ENCODE measurements at regions of chr2 and their contacts with region 1.

Region 1: GRCh38 chr2:118882709-118883210 is 35.3 kb upstream of the EN1 start:
- DNase-seq: peak; percentile 45
- H3K4me3 ChIP-seq: peak overlapping the region in 1 of 2 experiments; percentile 40; a peak in 1 of 4 replicates
- H3K27ac ChIP-seq: no peak overlapping the region
- H3K4me1 ChIP-seq: peaks cover 0 to 4% of the 10 kb centered on the region in 2 experiments; a peak in 1 of 4 replicates
- H3K27me3 ChIP-seq: no peaks in the 10 kb centered on the region
- CTCF ChIP-seq: peak; percentile 75
- EP300 ChIP-seq: no peak
- RAD21 ChIP-seq: peak; percentile 70

Region 2: DNA sequence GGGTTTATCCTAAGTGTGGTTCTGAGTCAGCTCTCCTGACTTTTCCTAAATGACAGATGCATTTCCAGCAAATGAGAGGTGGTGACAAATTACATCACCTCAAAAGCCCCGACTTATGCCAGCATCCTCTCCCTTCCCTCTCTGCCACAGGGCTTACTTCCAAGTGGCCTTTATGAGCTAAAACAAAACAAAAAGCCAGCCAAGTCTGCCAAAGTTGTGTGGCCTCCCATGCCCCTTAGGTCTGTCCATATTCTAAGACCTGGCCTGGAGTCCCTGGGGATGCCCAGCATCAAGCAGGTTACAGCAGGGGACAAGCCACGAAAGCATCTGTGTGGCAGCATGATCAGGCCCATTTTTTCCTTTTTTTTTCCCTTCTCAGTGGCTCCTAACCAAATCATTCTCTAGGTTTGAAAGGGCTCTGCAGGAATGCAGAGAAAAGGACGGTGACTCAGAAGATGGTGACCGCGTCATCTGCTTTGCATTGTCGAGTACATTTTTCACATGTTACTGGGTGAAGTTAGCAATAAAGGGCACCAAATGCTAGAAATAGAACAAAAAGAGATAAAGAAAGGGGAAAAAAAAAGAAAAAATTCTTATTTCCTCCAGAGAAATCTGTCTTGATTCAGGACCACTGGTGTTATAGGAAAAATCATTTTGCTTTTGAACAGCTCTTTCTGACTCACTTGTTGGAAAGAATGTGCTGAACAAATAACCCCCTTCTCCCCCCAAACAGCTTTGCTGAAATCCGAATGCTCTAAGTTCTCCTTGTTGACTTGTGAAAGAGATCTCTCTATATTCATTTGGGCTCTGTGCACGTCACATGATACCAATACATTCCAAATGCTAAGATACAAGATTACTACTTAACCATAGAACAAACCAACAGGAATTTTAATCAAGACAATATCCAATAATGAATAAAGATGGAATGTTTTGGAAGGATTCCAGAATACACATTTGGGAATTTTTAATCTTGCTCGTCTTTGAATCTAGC is 214.0 kb before region 1 on chr2:
- CTCF ChIA-PET with region 1: no interaction called
- POLR2A ChIA-PET with region 1: no interaction called
- DNase-seq: no peak
- H3K4me3 ChIP-seq: peak overlapping the region in 1 of 2 experiments; percentile 16; a peak in 3 of 4 replicates
- H3K27ac ChIP-seq: peak overlapping the region; percentile 81 to 98
- H3K4me1 ChIP-seq: peaks cover 20 to 27% of the 10 kb centered on the region in 2 experiments
- H3K27me3 ChIP-seq: no peaks in the 10 kb centered on the region
- CTCF ChIP-seq: no peak
- EP300 ChIP-seq: peak in 1 of 2 experiments; percentile 69; a peak in 2 of 4 replicates
- RAD21 ChIP-seq: no peak

Region 3: DNA sequence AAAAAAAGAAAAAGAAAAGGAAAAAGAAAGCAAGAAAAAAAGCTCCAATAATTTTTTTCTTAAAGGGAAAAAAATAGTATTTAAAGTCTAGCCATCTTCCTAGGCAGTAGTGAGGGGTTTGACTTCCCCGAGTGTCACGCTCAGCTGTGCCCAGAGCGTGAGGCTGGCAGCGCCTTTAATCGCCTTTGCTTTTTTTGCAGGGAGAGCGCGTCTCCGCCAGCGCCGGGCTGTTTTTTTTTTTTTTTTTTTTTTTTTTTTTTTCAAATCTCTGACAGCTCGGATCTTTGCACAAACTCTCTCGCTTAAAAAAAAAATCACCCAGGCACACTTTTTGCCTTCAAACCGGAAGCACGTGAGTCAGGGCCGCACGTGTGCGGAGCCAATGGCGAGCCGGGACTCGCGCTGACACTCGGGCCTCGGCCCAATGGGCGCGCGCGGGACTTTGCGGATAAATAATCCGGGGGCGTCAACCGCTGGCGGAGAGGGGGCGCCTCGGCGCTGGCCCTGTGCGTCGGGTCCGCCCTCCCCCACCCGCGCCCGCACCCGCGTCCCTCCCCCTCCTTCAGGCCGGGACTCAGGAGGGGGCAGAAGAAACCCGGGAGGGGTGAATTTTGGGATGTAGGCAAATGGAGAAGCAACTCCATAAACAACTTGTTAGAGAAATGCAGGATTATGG is 35.1 kb before region 1 on chr2 and contains the start of gene EN1:
- CTCF ChIA-PET with region 1: interaction called, 16 read pairs
- POLR2A ChIA-PET with region 1: no interaction called
- DNase-seq: peak; percentile 61
- H3K4me3 ChIP-seq: peak within 1 kb of the TSS in 1 of 2 experiments; percentile 55; a peak in 1 of 4 replicates
- H3K27ac ChIP-seq: no peak within 1 kb of the TSS
- H3K4me1 ChIP-seq: peaks cover 0 to 4% of the 10 kb centered on the region in 2 experiments; a peak in 2 of 4 replicates
- H3K27me3 ChIP-seq: peaks cover 93% of the 10 kb centered on the region
- CTCF ChIP-seq: no peak
- EP300 ChIP-seq: no peak
- RAD21 ChIP-seq: no peak
- polyA plus RNA-seq, gene EN1: not detected in 2 replicates

Region 4: GRCh38 chr2:118893100-118893499 is 10.3 kb after region 1 on chr2:
- CTCF ChIA-PET with region 1: interaction called, 13 read pairs
- POLR2A ChIA-PET with region 1: no interaction called
- DNase-seq: no peak
- H3K4me3 ChIP-seq: no peak overlapping the region
- H3K27ac ChIP-seq: no peak overlapping the region
- H3K4me1 ChIP-seq: no peaks in the 10 kb centered on the region
- H3K27me3 ChIP-seq: no peaks in the 10 kb centered on the region
- CTCF ChIP-seq: no peak
- EP300 ChIP-seq: no peak
- RAD21 ChIP-seq: no peak

Region 5: DNA sequence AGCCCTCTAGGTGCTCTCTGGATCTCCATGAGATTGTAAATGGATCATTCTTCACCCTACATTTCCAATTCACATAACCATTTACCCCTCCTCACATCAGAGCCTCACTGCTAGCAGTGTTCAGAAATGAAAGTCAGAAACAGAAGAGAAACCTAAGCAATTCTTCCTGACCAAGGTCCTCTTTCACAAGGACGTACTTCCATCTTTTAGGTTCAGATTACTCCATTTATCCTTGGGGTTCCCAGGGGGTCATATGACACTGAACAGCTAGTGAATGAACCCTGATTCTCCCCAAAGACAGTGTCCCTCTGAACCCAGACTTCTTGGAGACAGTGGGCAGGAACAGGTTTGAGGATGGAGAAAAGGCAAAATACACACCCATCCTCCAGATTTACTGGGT is 46.3 kb after region 1 on chr2:
- CTCF ChIA-PET with region 1: no interaction called
- POLR2A ChIA-PET with region 1: no interaction called
- DNase-seq: no peak
- H3K4me3 ChIP-seq: no peak overlapping the region
- H3K27ac ChIP-seq: no peak overlapping the region
- H3K4me1 ChIP-seq: no peaks in the 10 kb centered on the region
- H3K27me3 ChIP-seq: no peaks in the 10 kb centered on the region
- CTCF ChIP-seq: no peak
- EP300 ChIP-seq: no peak
- RAD21 ChIP-seq: no peak

Region 6: DNA sequence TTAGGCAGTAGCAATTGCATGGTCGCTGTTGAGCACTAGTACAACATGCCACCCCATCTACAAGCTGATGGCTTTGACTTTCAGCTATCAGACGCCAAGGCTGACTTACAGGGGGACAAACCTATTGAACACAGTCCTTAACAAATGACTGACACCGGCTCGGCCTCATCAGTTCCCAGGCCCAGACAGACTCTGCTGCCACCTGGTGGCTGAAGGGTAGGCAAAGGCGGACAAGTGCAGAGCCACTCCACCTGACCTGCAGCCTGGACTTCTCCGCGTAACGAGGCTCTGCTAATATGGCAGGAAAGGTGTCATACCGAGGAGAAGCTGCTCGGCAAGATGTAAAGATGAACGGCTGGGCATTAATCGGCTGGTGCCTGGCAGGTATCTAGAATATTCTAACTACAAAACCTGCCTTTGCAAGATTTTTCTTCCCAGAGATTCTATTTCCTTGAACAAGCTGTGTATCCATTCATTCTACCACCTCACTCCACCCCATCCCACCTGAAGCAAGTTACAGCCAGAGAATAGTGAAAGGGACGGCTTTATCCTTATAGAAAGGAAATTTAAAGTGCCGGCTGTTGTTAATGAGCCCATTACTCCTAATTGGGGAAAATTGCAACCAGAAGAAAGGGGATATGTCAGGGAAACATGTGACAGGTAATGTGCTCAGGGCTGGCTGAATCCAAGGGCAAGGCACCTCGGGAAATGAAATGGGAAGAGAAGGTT is 408.3 kb after region 1 on chr2:
- CTCF ChIA-PET with region 1: interaction called, 16 read pairs
- POLR2A ChIA-PET with region 1: no interaction called
- DNase-seq: peak; percentile 63
- H3K4me3 ChIP-seq: peak overlapping the region in 1 of 2 experiments; percentile 26; a peak in 1 of 4 replicates
- H3K27ac ChIP-seq: no peak overlapping the region
- H3K4me1 ChIP-seq: no peaks in the 10 kb centered on the region
- H3K27me3 ChIP-seq: no peaks in the 10 kb centered on the region
- CTCF ChIP-seq: peak; percentile 59
- EP300 ChIP-seq: no peak
- RAD21 ChIP-seq: peak; percentile 72

Region 7: DNA sequence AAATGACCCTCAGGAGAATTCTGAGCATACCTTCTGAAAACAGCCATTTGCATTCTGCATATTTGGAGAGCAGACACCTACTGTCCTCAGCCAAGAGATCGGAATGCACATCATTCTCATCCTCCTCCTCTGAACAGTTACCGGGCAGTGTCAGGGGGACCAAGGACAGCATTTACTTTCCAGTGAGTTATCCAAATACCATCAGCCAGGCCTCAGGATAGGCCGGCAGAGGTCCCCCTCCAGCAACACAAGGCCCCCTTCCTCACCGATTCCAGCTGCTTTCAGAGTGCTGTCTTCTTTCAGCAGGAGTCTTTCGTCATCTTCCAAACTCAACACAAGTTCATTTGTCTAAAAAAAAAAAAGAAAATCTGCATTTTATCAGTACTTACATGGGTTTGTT is 428.6 kb after region 1 on chr2:
- CTCF ChIA-PET with region 1: interaction called, 20 read pairs
- POLR2A ChIA-PET with region 1: no interaction called
- DNase-seq: no peak
- H3K4me3 ChIP-seq: no peak overlapping the region
- H3K27ac ChIP-seq: no peak overlapping the region
- H3K4me1 ChIP-seq: peaks cover 0 to 2% of the 10 kb centered on the region in 2 experiments; a peak in 1 of 4 replicates
- H3K27me3 ChIP-seq: no peaks in the 10 kb centered on the region
- CTCF ChIP-seq: no peak
- EP300 ChIP-seq: no peak
- RAD21 ChIP-seq: no peak